ENCODE measurements at regions of chr6 and their contacts with region 1.

Region 1: DNA sequence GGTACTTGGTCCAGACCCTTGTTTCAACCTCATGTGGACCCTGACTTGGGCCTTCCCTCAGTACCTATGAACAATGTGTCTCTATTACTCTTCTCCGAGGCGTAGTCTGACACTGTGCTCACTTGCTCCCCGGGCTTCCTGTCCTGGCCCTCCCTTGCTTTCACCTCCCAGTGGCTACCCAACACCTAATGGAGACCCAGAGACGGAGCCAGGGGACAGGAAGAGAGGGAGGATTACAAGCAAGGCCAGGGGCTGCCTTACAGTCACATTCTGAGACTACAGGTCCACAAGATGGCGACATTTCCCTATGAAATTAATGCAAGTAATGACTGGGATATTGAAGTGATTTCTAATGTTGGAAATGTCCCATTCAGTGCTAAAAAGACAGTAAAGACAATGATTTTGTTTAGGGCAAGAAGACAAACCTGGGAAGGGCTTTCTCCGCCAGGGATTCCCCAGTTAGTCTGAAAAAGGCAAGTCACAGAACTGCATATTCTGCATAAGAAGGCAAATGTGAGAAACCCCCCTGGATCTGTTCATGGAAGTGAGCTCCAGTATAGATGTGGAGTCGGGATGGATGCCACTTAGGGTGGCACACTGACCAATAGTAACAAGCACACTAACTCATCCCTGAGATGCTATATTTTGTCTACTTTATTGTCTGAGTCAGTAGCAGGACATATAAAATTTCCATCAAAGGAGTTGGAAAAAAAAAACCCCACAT is 44.0 kb upstream of the ZBTB24 start:
- DNase-seq: peak in 30 of 42 donors; percentile 3 to 76 (median 37)

Region 2: DNA sequence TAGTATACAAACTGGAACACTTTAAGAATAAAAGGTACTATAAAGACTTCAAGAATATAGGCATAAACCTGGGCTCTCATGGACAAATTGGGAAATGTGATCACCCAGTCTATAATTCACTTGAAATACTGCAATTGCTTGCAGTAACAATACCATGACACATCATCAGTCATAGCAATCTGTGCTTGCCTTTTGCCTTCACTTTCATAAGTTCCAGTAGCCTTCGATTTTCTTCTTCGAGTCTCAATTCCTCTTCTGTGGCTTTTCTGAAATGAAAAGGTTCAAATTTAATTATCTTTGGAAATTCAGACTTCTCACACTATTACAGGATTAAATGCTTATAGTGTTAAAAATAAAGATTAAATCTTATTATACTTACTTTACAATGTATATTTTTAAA is 52.3 kb after region 1 on chr6:
- intact Hi-C with region 1: no loop called
- DNase-seq: no peak

Region 3: GRCh38 chr6:110053395-110054240 is 526.6 kb after region 1 on chr6:
- intact Hi-C with region 1: loop called (anchors 5 kb)
- DNase-seq: peak in 25 of 42 donors; percentile 26 to 77 (median 57)

Measured in head of caudate nucleus (tissue), 42 donors.